ENCODE measurements at regions of chr3 and their contacts with region 1.

Region 1: GRCh38 chr3:136752422-136753325 is 496 bp upstream of the STAG1 start:
- DNase-seq: peak; percentile 96 to 99 (median 99)
- ATAC-seq: peak; percentile 81 to 84
- H3K4me3 Mint-ChIP-seq: peak overlapping the region; percentile 92 to 98 (median 94)
- H3K27ac Mint-ChIP-seq: peak overlapping the region; percentile 91 to 99 (median 96)
- H3K4me1 Mint-ChIP-seq: peaks cover 24 to 50% (median 43%) of the 10 kb centered on the region in 4 donors
- H3K27me3 Mint-ChIP-seq: no peaks in the 10 kb centered on the region

Region 2: GRCh38 chr3:136250226-136250902 is 502.3 kb before region 1 on chr3 and contains the start of gene PCCB:
- POLR2A ChIA-PET with region 1: interaction called, 15 read pairs
- DNase-seq: peak; percentile 80 to 98 (median 91)
- ATAC-seq: peak; percentile 97 to 98
- H3K4me3 Mint-ChIP-seq: peak within 1 kb of the TSS; percentile 81 to 94 (median 91)
- H3K27ac Mint-ChIP-seq: peak within 1 kb of the TSS; percentile 88 to 98 (median 94)
- H3K4me1 Mint-ChIP-seq: peaks cover 12 to 27% (median 25%) of the 10 kb centered on the region in 4 donors
- H3K27me3 Mint-ChIP-seq: no peaks in the 10 kb centered on the region
- polyA plus RNA-seq, gene PCCB: 30.2 to 42.5 (median 39.1) TPM

Region 3: GRCh38 chr3:136390574-136390973 is 362.1 kb before region 1 on chr3:
- POLR2A ChIA-PET with region 1: interaction called, 12 read pairs
- DNase-seq: no peak
- ATAC-seq: no peak
- H3K4me3 Mint-ChIP-seq: no peak overlapping the region
- H3K27ac Mint-ChIP-seq: no peak overlapping the region
- H3K4me1 Mint-ChIP-seq: no peaks in the 10 kb centered on the region
- H3K27me3 Mint-ChIP-seq: no peaks in the 10 kb centered on the region

Region 4: DNA sequence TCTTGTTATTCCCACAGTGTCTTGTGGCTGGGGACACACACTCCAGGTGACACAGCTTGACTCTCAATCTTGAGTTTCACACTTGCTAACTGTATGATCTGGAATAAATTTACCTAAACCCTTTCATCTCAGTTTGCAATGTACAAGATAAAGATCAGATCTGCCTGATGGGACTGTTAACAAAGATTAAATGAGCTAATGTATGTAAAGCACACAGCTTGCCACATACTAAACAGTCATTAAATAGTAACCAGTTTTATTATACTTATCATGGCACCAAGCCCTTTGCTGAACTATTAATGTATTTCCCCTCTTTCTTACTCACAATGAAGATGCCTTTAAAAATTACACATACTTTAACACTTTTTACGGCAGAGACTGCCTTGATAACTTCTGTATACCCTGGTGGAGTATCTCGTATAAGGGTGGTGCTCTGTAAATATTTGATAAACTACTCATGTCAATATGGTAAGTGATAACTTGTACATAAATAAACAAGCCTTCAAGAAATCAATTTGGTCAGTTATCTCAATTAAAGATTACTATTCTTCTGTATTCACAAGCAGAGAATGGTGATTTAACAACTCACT is 185.0 kb before region 1 on chr3:
- POLR2A ChIA-PET with region 1: no interaction called
- DNase-seq: no peak
- ATAC-seq: no peak
- H3K4me3 Mint-ChIP-seq: no peak overlapping the region
- H3K27ac Mint-ChIP-seq: no peak overlapping the region
- H3K4me1 Mint-ChIP-seq: peaks cover 0 to 17% (median 12%) of the 10 kb centered on the region in 4 donors
- H3K27me3 Mint-ChIP-seq: no peaks in the 10 kb centered on the region

Region 5: DNA sequence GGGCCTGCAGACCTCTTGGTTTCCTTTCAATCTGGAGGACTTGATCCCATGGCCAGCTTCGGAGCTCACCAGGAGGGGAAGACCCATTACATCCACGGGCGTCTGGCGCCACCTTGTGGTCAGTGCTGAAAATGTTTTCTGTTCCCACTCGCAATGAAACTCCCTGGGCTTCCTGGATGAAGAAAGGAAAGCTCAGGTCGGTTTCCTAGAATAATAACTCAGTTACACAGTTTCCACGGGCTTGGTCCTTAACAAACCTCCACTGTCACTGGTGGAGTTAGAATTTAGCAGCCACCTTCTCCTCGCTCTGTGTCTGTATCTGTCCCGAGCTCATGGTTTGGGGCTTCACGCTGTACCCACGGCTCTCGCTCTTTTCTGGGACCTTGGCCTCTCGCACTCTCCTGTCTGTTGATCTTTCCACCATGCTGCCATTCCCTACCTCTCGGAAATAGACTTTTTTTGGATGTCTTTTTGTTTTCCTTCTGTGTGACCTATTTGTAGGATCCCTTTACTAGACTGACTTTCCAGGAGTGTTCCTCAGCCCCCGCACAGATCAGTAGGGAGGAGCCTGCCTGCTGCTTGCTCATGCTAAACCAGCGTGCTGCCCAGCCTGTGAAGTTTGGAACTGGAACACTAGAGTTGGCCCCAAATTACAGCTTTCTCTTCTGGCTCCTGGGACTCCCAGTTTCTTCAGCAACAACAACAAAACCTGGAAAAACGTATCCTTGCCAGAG is 261.4 kb after region 1 on chr3:
- POLR2A ChIA-PET with region 1: interaction called, 17 read pairs
- DNase-seq: peak; percentile 66 to 89 (median 80)
- ATAC-seq: peak; percentile 77 to 96
- H3K4me3 Mint-ChIP-seq: peak overlapping the region; percentile 66 to 87 (median 82)
- H3K27ac Mint-ChIP-seq: peak overlapping the region in 4 of 10 donors; percentile 15 to 58 (median 46)
- H3K4me1 Mint-ChIP-seq: peaks cover 6 to 11% (median 9%) of the 10 kb centered on the region in 4 donors
- H3K27me3 Mint-ChIP-seq: peaks cover 0 to 3% (median 1%) of the 10 kb centered on the region in 5 donors

Measured in naive thymus-derived CD8-positive, alpha-beta T cell (primary cell).